Esophagus squamous epithelium (tissue), 5 donors: ENCODE measurements at regions of chr1 and their contacts with region 1.

Region 1: DNA sequence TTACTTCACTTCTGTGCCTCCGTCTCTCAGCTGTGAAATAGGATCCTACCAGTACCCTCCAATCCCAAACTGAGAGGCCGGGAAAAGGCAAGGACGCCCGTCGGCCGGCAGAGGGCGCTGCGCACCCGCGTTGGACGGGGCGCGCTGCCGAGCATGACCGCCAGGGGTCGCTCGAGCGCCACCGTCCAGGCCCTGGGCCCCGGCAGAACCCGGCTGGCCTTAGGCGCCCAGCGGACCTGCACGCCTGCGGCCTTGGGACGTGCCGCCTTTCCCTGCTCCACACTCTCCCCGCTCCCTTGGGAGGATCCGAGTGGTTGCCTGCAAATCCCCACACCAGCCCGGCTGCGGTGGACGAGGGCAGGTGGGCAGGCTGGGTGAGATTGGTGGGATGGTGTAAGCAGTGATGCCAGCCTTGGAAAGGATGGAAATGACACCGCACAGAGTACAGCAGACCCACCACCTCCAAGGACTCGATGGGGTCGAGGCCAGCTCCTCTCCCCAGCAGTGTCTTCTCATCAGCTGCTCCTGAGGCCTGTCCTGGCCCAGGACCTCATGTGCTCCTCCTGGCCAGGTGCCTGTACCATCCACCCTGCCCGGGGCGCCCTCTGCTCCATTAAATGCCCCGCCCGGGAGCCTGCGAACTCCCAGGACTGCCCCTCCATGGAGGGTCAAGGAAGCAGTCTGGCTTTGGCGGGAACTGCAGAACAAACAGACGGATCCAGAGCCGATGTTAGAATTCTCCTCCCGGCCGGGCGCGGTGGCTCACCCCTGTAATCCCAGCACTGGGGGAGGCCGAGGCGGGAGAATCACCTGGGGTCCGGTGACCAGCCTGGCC is 47.4 kb upstream of the LBR start:
- DNase-seq: no peak
- H3K4me3 ChIP-seq: peak overlapping the region in 2 of 4 donors; percentile 16 to 18
- H3K27ac ChIP-seq: peak overlapping the region in 1 of 4 donors; percentile 22
- H3K4me1 ChIP-seq: peaks cover 0 to 33% (median 0%) of the 10 kb centered on the region in 3 donors
- H3K27me3 ChIP-seq: no peaks in the 10 kb centered on the region
- CTCF ChIP-seq: peak; percentile 100
- POLR2A ChIP-seq: no peak

Region 2: GRCh38 chr1:225772323-225772768 is 297.1 kb after region 1 on chr1:
- intact Hi-C with region 1: loop called (anchors 5 kb)
- DNase-seq: no peak
- H3K4me3 ChIP-seq: no peak overlapping the region
- H3K27ac ChIP-seq: peak overlapping the region; percentile 54 to 77 (median 66)
- H3K4me1 ChIP-seq: peaks cover 24 to 68% (median 39%) of the 10 kb centered on the region in 3 donors
- H3K27me3 ChIP-seq: no peaks in the 10 kb centered on the region
- CTCF ChIP-seq: peak; percentile 28 to 90 (median 75)
- POLR2A ChIP-seq: no peak

Region 3: GRCh38 chr1:225845571-225846259 is 370.5 kb after region 1 on chr1:
- intact Hi-C with region 1: loop called (anchors 10 kb)
- DNase-seq: no peak
- H3K4me3 ChIP-seq: no peak overlapping the region
- H3K27ac ChIP-seq: peak overlapping the region in 3 of 4 donors; percentile 35 to 59 (median 54)
- H3K4me1 ChIP-seq: peaks cover 9 to 40% (median 10%) of the 10 kb centered on the region in 3 donors
- H3K27me3 ChIP-seq: no peaks in the 10 kb centered on the region
- CTCF ChIP-seq: peak; percentile 27 to 83 (median 70)
- POLR2A ChIP-seq: no peak

Region 4: DNA sequence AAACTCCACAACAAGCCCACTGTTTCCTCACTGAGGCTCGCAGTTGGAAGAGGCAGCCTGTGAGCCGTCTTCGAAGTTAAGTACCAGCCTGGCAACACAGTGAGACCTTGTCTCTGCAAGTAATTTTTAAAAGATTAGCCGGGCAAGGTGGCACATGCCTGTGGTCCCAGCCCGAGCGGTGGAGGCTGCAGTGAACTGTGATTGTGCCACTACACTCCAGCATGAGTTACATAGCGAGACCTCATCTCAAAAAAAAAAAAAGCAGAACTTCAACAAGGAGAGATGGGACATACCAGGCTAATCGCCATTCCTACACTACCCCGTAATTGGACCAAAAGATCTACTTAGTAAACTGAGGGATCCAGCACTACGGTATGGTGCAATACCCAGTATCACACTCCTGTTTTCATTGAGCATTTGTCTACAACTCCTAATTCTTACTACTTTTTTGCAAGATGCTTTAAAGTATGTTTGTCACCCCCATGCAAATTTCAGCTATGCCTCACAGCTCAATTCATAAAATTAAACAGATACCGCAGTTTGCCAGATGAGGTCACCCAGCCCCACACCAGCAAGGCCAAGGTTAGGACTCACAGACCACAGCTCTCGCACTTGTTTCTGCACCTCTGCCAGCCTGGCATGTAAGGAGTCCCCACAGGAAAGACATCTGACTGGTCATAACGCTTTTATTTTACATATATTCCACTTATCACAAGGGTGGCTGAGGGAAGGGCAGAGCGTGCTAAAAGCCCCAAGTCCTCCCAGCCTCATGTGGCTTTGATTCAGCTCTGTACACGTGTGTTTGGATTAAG is 502.9 kb after region 1 on chr1:
- intact Hi-C with region 1: loop called (anchors 5 kb)
- DNase-seq: no peak
- H3K4me3 ChIP-seq: no peak overlapping the region
- H3K27ac ChIP-seq: no peak overlapping the region
- H3K4me1 ChIP-seq: peaks cover 0 to 17% (median 5%) of the 10 kb centered on the region in 3 donors
- H3K27me3 ChIP-seq: no peaks in the 10 kb centered on the region
- CTCF ChIP-seq: no peak
- POLR2A ChIP-seq: no peak